ENCODE measurements at regions of chr1 and their contacts with region 1.

Region 1: GRCh38 chr1:204506961-204507387 is 9.2 kb upstream of the MDM4 start:
- DNase-seq: peak; percentile 95
- H3K4me3 Mint-ChIP-seq: peak overlapping the region; percentile 88
- H3K27ac Mint-ChIP-seq: peak overlapping the region; percentile 99
- H3K4me1 Mint-ChIP-seq: peaks cover 20% of the 10 kb centered on the region
- H3K27me3 Mint-ChIP-seq: peaks cover 4% of the 10 kb centered on the region

Region 2: GRCh38 chr1:204162231-204163074 is 344.5 kb before region 1 on chr1:
- CTCF ChIA-PET with region 1: interaction called, 4 read pairs
- intact Hi-C with region 1: loop called (anchors 2 kb)
- DNase-seq: peak; percentile 87
- H3K4me3 Mint-ChIP-seq: no peak overlapping the region
- H3K27ac Mint-ChIP-seq: no peak overlapping the region
- H3K4me1 Mint-ChIP-seq: no peaks in the 10 kb centered on the region
- H3K27me3 Mint-ChIP-seq: peaks cover 1% of the 10 kb centered on the region

Region 3: GRCh38 chr1:204257954-204258752 is 248.8 kb before region 1 on chr1:
- CTCF ChIA-PET with region 1: interaction called, 3 read pairs
- intact Hi-C with region 1: loop called (anchors 2 kb)
- DNase-seq: peak; percentile 62
- H3K4me3 Mint-ChIP-seq: no peak overlapping the region
- H3K27ac Mint-ChIP-seq: no peak overlapping the region
- H3K4me1 Mint-ChIP-seq: no peaks in the 10 kb centered on the region
- H3K27me3 Mint-ChIP-seq: no peaks in the 10 kb centered on the region

Region 4: GRCh38 chr1:204398217-204399081 is 108.5 kb before region 1 on chr1:
- CTCF ChIA-PET with region 1: interaction called, 33 read pairs
- intact Hi-C with region 1: no loop called
- DNase-seq: peak; percentile 73
- H3K4me3 Mint-ChIP-seq: no peak overlapping the region
- H3K27ac Mint-ChIP-seq: peak overlapping the region; percentile 87
- H3K4me1 Mint-ChIP-seq: peaks cover 10% of the 10 kb centered on the region
- H3K27me3 Mint-ChIP-seq: no peaks in the 10 kb centered on the region

Region 5: DNA sequence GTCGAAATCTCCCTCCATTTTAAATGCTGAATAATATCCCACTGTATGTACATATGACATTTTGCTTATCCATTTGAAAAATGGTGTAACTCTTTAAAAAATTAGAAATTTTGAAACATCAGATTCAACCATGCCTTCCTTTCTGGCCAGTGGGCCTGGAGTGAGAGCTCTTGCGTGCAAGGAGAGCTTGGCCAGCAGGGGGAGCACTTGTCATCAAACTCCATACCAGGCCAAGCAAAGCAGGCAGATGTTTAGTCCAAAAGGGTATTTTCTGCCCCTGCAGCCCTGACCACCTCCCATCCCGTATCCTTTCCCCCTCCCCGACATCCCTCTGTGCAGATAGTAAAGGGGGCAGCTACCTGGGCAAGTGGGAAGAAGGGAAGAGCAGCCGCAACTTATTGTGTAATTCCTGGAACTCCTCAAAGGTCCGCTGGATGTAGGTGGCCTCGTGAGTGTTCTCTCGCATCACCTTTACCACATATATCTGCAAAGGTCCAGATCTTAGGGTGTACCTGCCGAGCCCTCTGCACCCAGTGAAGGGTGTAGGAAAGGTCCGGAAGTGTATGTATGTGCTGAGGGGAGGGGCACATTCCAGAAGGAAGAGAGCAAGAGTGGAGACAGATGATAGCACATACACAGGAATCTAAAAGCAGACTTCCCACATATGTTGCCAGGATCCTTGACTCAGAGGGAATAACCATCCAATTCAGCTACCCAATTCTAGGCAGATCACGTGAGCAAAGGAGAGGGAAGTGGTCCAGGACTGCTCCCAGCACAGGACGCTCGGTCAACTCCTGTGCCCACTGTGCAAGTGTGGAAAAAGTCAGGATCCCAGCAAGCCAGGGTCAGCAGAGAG is 75.4 kb before region 1 on chr1:
- CTCF ChIA-PET with region 1: interaction called, 859 read pairs
- intact Hi-C with region 1: loop called (anchors 1 kb)
- DNase-seq: peak; percentile 89
- H3K4me3 Mint-ChIP-seq: no peak overlapping the region
- H3K27ac Mint-ChIP-seq: no peak overlapping the region
- H3K4me1 Mint-ChIP-seq: peaks cover 8% of the 10 kb centered on the region
- H3K27me3 Mint-ChIP-seq: no peaks in the 10 kb centered on the region

Region 6: DNA sequence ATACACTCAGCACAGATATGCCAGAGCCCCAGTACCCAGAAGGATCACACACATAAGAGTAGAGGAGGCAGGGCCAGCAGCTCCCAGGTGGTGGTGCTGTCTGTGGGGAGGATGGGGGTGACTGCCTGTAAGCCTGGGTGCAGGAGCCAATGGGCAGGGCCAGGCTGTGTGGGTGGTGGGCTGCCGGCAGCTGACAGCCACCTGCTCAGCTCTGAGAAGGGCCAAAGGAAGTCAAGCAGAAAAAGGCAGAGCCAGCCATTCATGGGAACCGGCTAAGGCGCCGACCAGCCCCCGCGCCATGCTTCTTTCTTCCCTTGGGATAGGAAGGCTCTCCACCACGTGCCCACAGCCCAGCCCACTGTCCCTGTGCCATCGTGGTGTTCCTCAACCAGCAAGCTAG is 26.5 kb before region 1 on chr1:
- CTCF ChIA-PET with region 1: interaction called, 10 read pairs
- intact Hi-C with region 1: no loop called
- DNase-seq: peak; percentile 21
- H3K4me3 Mint-ChIP-seq: no peak overlapping the region
- H3K27ac Mint-ChIP-seq: no peak overlapping the region
- H3K4me1 Mint-ChIP-seq: peaks cover 63% of the 10 kb centered on the region
- H3K27me3 Mint-ChIP-seq: no peaks in the 10 kb centered on the region

Measured in activated naive CD4-positive, alpha-beta T cell treated with anti-CD3 and anti-CD28 coated beads for 36 hours (primary cell).